ENCODE measurements at regions of chr14 and their contacts with region 1.

Region 1: DNA sequence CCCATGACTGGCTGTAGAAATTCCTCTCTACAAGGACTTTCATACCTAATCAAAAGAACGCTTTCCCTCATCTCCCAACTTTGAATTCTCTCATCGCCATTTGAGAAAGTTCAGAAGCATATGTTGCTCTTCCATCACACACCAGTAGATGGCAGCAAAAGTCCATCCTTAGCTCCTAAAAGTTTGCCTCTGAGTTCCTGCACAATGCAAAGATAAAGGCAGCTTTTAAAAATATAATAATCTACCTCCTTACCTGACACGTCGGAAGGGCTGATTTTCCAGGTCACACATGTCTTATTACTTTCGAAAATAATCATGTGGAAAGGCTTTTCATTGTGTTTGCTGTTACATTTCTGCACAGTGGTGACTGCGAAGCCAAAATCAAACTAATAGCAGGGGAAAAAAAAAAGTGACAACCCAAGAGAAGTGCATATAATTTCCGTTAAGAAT is 456.7 kb upstream of the SEL1L start:
- DNase-seq: no peak
- ATAC-seq: peak in 1 of 2 donors; percentile 45

Region 2: GRCh38 chr14:81625343-81625742 is 365.0 kb before region 1 on chr14:
- intact Hi-C with region 1: loop called in 1 of 2 experiments (anchors 10 kb)
- DNase-seq: no peak
- ATAC-seq: peak in 1 of 2 donors; percentile 47